Activated CD8-positive, alpha-beta memory T cell treated with anti-CD3 and anti-CD28 coated beads, Interleukin-2, amount 10 ng/mL, durations not matched to agents 7 days and 5 days (primary cell): ENCODE measurements at regions of chr17 and their contacts with region 1.

Region 1: DNA sequence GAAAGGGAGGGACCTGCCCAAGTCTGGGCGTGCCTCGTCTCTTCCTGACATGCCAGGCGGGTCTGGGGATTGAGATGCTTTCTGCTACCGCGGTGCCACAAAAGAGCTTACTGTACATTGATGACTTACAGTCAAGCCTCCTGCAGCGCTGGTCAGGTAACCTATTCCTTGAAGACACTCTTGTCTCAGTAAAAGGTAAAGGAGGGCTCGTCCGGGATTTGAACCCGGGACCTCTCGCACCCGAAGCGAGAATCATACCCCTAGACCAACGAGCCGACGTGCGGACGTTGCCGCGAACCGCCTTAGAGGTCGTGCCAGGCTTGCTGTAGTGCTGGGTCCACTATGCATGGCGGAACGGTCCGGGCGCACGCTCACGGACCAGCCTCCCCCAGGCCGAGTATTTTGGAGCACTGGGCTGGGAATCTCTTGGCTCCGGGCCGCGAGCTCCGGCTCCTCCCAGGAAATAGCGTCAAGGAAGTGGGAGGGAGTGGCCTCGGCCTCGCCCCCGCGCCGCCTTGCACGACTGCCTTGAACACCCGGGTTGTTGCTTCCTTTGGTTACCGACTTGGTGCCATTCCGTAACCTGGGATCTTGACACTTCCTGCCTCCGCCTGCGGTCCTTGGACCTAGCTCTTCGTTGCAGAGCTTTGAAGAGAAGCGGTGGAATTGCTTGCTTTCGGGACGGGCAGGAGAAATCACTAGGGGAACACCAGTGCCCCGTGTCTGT is 12.4 kb upstream of the AURKB start:
- DNase-seq: peak; percentile 94
- ATAC-seq: peak; percentile 52
- H3K4me3 Mint-ChIP-seq: peak overlapping the region; percentile 95
- H3K27ac Mint-ChIP-seq: peak overlapping the region; percentile 97
- H3K4me1 Mint-ChIP-seq: peaks cover 51% of the 10 kb centered on the region
- H3K27me3 Mint-ChIP-seq: no peaks in the 10 kb centered on the region

Region 2: DNA sequence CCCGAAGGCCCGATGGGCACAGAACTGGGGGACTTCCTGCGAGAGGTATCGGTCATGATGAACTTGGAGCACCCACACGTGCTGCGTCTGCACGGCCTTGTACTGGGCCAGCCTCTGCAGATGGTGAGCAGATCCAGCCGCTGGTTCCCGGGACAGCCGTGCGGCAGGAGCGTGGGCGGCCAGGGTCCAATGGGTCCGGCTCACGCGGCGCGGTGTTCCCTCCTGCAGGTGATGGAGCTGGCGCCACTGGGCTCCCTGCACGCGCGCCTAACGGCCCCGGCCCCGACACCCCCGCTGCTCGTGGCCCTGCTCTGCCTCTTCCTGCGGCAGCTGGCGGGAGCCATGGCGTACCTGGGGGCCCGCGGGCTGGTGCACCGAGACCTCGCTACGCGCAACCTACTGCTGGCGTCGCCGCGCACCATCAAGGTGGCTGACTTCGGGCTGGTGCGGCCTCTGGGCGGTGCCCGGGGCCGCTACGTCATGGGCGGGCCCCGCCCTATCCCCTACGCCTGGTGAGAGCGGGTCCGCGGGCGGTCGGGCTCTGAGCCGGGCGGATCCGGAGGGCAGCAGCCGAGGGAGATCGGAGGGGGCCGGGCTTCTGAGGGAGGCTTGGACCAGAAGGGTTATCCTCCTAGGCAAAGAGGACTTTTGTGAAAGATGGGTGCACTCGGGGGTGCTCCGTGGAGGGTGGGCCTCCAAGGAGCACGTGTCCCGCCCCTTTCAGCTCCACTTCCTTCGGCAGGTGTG is 838.9 kb before region 1 on chr17:
- CTCF ChIA-PET with region 1: no interaction called
- DNase-seq: peak; percentile 81
- ATAC-seq: peak; percentile 99
- H3K4me3 Mint-ChIP-seq: peak overlapping the region; percentile 72
- H3K27ac Mint-ChIP-seq: peak overlapping the region; percentile 68
- H3K4me1 Mint-ChIP-seq: peaks cover 7% of the 10 kb centered on the region
- H3K27me3 Mint-ChIP-seq: peaks cover 33% of the 10 kb centered on the region

Region 3: DNA sequence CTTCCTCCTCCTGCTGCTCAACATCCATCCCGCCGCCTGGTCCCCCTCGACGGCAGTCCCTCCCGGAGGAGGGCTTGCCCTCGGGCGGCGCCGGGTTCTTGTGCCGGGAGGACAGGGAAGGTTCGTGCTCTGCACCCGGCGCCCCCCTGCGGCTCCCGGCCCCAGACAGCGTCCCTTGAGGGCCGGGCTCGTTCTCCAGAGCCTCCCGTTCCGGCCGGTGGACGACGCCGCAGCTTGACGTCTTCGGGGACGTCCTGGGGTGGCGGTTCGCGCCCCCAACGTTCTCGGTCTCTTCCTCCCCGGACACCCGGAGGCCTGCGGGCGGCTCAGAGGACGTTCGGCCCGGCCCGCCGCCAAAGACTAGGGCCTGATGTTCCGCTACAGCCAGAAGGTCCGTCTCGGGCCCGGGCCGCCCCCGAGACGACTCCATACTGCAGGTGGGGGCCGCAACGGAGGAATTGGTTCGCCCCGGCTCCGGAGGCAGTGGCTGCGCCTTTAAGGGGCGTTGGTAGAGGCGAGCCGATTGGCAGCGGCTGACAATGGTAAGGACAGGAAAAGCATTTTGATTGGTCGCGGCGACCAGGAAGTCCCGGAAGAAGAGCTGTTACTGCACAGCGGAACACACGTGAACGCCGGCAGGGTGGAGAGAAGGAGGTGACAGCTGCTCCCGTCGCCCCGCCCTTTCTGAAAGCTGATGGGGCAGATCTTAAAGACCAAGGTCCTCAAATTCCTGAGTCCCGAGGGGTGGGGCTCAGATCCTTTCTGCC is 32.9 kb before region 1 on chr17 and contains the start of gene BORCS6:
- CTCF ChIA-PET with region 1: interaction called, 124 read pairs
- DNase-seq: peak; percentile 99
- ATAC-seq: peak; percentile 70
- H3K4me3 Mint-ChIP-seq: no peak within 1 kb of the TSS
- H3K27ac Mint-ChIP-seq: no peak within 1 kb of the TSS
- H3K4me1 Mint-ChIP-seq: peaks cover 10% of the 10 kb centered on the region
- H3K27me3 Mint-ChIP-seq: no peaks in the 10 kb centered on the region
- total RNA-seq, gene BORCS6: 14.9 to 16.8 TPM

Region 4: DNA sequence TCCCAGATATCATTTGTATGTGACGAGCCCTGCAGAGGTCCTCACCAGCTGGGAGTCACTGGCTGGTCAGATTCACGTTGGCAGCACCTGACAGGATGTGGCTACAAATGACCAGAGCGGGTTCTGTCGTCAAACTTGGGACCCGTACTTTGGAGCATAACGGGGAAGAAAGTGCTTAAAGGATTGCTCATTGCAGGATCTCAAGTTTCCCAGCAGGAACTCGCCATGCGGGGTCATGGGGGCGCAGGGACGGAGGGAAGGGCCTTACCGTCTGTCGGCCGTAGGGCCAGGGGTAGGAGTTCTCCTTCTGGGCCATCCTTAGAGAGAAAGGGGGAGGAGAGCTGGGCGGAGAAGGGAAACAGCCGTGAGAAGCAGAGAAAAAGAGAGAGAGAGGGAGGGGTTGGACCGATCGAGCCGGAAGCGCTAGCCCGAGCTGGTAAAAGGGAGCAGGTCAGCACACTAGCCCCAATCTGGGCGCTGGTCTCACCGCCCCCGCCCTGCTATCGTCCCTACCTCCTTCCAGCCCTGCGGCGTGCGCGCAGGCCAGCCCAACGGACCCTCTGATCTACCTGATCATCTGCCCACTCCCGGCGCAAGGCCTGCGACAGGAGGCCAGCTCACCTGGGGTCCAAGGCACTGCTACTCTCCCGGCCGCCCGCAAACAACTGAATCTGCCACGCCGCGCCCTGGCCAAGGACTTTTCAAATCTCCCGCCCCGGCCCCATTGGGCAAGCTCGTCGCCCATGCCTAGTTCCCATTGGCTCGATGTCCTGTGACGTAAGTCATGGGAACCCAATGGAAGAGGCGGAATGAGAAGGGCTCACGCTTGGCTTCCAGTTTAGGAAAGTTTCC is 12.7 kb before region 1 on chr17 and contains the start of gene AURKB:
- CTCF ChIA-PET with region 1: interaction called, 25 read pairs
- DNase-seq: peak; percentile 97
- ATAC-seq: peak; percentile 99
- H3K4me3 Mint-ChIP-seq: peak within 1 kb of the TSS; percentile 100
- H3K27ac Mint-ChIP-seq: peak within 1 kb of the TSS; percentile 99
- H3K4me1 Mint-ChIP-seq: peaks cover 35% of the 10 kb centered on the region
- H3K27me3 Mint-ChIP-seq: no peaks in the 10 kb centered on the region
- total RNA-seq, gene AURKB: 197 to 234 TPM

Region 5: GRCh38 chr17:8248751-8249607 is 26.2 kb after region 1 on chr17 and contains the start of gene PFAS:
- CTCF ChIA-PET with region 1: interaction called, 61 read pairs
- DNase-seq: peak; percentile 98
- ATAC-seq: peak; percentile 75
- H3K4me3 Mint-ChIP-seq: peak within 1 kb of the TSS; percentile 98
- H3K27ac Mint-ChIP-seq: peak within 1 kb of the TSS; percentile 100
- H3K4me1 Mint-ChIP-seq: peaks cover 38% of the 10 kb centered on the region
- H3K27me3 Mint-ChIP-seq: no peaks in the 10 kb centered on the region
- total RNA-seq, gene PFAS: 75.1 to 113 TPM

Region 6: DNA sequence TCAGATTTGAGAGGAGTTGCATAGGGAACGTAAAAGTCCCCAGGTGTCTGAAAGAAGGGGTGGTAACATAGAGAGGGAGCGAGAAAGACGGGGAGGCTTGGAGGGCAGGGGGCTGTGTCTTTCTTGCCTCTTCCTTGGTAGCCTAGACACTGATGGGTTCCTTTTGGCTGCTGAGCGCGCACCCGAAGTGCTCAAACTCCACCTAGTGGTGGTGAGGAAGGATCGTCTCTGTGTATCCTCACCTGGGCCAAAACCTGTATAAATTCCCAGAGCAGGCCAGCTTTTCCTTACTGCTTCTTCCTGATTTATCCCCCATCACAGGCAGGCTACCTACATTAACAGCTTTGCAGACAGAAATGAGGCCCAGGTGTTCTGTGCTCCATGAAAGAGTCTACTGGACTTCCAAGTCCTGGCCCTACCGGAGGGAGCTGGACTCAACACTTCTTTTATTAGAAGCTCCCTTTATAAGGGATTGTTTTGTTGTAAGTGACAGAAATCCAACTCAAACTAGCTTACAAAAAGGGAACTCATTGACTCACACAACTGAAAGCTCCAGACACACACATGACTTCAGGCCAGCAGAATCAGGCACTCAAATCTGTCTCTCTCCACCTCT is 77.9 kb after region 1 on chr17:
- CTCF ChIA-PET with region 1: interaction called, 22 read pairs
- DNase-seq: peak; percentile 74
- ATAC-seq: peak; percentile 92
- H3K4me3 Mint-ChIP-seq: no peak overlapping the region
- H3K27ac Mint-ChIP-seq: peak overlapping the region; percentile 58
- H3K4me1 Mint-ChIP-seq: peaks cover 11% of the 10 kb centered on the region
- H3K27me3 Mint-ChIP-seq: no peaks in the 10 kb centered on the region